ENCODE measurements at regions of chr5 and their contacts with region 1.

Region 1: DNA sequence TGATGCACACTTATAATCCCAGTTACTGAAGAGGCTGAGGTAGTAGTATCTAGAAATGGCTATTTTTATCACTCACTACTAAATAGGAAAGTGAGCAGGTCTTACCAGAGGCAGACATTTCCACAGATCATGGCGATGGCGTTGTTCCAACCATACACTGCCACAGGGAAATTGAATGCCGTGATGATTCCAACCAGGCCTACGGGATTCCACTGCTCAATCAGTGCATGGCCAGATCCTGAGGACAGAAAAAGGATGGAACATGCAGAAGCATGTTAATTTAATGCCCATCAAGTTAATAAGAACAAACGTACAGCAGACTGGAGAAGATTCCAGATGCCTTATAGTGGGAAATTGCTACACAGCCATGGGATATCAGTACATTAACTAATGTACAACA is 18.0 kb downstream of the ALDH7A1 start:
- DNase-seq: no peak
- H3K4me3 ChIP-seq: no peak overlapping the region
- H3K27ac ChIP-seq: no peak overlapping the region
- H3K4me1 ChIP-seq: no peaks in the 10 kb centered on the region
- H3K27me3 ChIP-seq: no peaks in the 10 kb centered on the region
- CTCF ChIP-seq: no peak
- POLR2A ChIP-seq: no peak

Region 2: GRCh38 chr5:127337876-127338275 is 760.9 kb after region 1 on chr5:
- intact Hi-C with region 1: no loop called
- DNase-seq: no peak
- H3K4me3 ChIP-seq: no peak overlapping the region
- H3K27ac ChIP-seq: no peak overlapping the region
- H3K4me1 ChIP-seq: no peaks in the 10 kb centered on the region
- H3K27me3 ChIP-seq: no peaks in the 10 kb centered on the region
- CTCF ChIP-seq: no peak
- POLR2A ChIP-seq: no peak

Region 3: DNA sequence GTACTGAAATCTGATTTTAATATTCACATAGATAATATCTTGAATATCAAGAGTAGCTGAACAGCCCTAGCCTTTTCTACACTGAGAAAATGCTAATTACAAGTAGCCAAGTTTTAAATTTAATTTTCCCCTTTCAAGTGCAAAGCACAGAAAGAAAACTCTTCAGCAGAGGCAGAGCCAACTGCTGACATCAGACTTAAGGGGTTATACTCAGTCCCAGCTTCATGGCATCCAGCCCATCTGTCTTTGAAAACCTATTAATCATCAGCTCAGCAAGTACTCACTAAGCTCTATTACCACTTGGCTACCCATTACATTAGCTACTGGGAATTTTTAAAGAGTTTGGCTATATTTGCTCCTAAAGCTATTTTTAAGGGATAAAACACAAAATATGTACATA is 1727.1 kb after region 1 on chr5:
- intact Hi-C with region 1: loop called (anchors 10 kb)
- DNase-seq: no peak
- H3K4me3 ChIP-seq: no peak overlapping the region
- H3K27ac ChIP-seq: no peak overlapping the region
- H3K4me1 ChIP-seq: no peaks in the 10 kb centered on the region
- H3K27me3 ChIP-seq: no peaks in the 10 kb centered on the region
- CTCF ChIP-seq: no peak
- POLR2A ChIP-seq: no peak

Measured in vagina (tissue), 2 donors.